ENCODE measurements at regions of chr9 and their contacts with region 1.

Region 1: DNA sequence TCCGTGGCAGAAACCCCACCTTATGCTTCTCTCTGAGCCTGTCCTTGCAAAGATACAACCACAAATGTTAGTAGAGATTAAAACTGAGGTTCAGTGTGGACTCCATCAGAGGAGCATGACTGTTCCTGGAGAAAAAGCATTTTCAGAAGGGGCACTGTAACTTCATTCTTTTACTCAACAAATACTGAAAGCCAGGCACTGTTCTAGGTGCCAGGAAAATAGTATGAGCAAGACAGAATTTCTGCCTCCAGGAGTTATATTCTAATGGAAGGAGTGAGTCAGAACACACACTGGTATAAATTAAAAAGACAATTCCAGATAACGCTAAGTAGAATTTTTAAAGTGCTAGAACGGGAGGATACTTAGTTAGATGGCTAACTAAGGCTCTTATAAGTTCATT is 251.4 kb upstream of the GAS1 start:
- DNase-seq: no peak
- H3K4me3 ChIP-seq: no peak overlapping the region
- H3K27ac ChIP-seq: no peak overlapping the region
- H3K4me1 ChIP-seq: peaks cover 9% of the 10 kb centered on the region
- H3K27me3 ChIP-seq: no peaks in the 10 kb centered on the region
- CTCF ChIP-seq: no peak
- POLR2A ChIP-seq: no peak

Region 2: GRCh38 chr9:87148331-87149104 is 50.2 kb before region 1 on chr9:
- intact Hi-C with region 1: loop called (anchors 5 kb)
- DNase-seq: peak in 1 of 2 donors; percentile 91
- H3K4me3 ChIP-seq: peak overlapping the region; percentile 29 to 39
- H3K27ac ChIP-seq: peak overlapping the region; percentile 60
- H3K4me1 ChIP-seq: peaks cover 13% of the 10 kb centered on the region
- H3K27me3 ChIP-seq: no peaks in the 10 kb centered on the region
- CTCF ChIP-seq: no peak
- POLR2A ChIP-seq: no peak

Region 3: GRCh38 chr9:88143957-88144625 is 945.4 kb after region 1 on chr9:
- intact Hi-C with region 1: no loop called
- DNase-seq: no peak
- H3K4me3 ChIP-seq: no peak overlapping the region
- H3K27ac ChIP-seq: no peak overlapping the region
- H3K4me1 ChIP-seq: no peaks in the 10 kb centered on the region
- H3K27me3 ChIP-seq: no peaks in the 10 kb centered on the region
- CTCF ChIP-seq: no peak
- POLR2A ChIP-seq: no peak

Measured in vagina (tissue), 2 donors.